ENCODE measurements at regions of chr16 and their contacts with region 1.

Region 1: GRCh38 chr16:57591086-57591869 is 37.2 kb upstream of the ADGRG1 start:
- DNase-seq: peak; percentile 74
- H3K4me3 ChIP-seq: no peak overlapping the region
- H3K27ac ChIP-seq: peak overlapping the region; percentile 32
- H3K4me1 ChIP-seq: peaks cover 12% of the 10 kb centered on the region
- H3K27me3 ChIP-seq: no peaks in the 10 kb centered on the region
- CTCF ChIP-seq: peak; percentile 92 to 95
- POLR2A ChIP-seq: no peak

Region 2: GRCh38 chr16:57535680-57536305 is 55.5 kb before region 1 on chr16:
- CTCF ChIA-PET with region 1: no interaction called
- POLR2A ChIA-PET with region 1: no interaction called
- dilution Hi-C with region 1: no loop called
- intact Hi-C with region 1: no loop called
- DNase-seq: peak; percentile 87
- H3K4me3 ChIP-seq: peak overlapping the region; percentile 80 to 82 (median 80)
- H3K27ac ChIP-seq: peak overlapping the region; percentile 18
- H3K4me1 ChIP-seq: peaks cover 25% of the 10 kb centered on the region
- H3K27me3 ChIP-seq: peaks cover 3 to 24% of the 10 kb centered on the region in 2 experiments
- CTCF ChIP-seq: peak in 1 of 2 donors; percentile 16
- POLR2A ChIP-seq: no peak

Region 3: DNA sequence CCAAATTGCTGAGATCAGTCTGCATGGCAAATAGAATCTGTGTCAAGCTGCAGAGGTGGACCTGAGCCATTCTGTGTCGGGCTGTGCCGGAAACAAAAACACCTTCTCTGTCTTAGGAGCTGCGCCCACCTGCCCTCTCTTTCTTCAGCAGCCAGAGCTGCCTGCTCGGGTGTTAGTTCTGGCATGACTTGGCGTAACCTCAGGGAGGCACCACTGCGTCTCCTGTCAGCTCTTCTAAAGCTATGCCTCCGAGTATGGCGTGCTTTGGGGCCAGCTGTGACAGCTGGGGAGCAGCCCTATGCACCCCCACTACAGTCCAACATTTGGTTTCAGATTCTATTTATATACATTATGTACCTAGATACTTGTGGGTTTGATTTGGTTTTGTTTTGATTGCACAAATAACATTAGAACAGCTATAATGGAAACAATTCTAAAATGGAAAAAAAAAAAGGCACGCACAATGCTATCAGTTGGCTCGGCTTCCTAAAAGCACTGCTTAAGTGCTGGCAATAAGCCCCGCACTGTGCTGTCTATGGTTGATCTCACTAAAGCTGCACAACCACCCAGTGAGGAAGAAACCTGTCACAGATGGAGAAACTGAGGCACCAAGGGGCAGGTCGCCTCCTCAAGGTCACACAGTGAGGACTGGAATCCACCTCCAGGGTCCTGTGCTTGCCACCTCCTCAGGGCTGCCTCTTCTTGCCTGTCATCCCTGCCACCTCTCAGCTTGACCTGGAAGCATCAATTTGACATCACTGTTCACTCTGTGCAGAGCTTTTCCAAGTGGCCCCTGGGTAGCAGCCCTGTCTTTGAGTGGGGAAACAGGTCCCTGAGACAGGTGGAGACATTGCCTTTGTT is 18.5 kb after region 1 on chr16:
- CTCF ChIA-PET with region 1: interaction called, 25 read pairs
- POLR2A ChIA-PET with region 1: no interaction called
- dilution Hi-C with region 1: no loop called
- intact Hi-C with region 1: no loop called
- DNase-seq: peak; percentile 53
- H3K4me3 ChIP-seq: no peak overlapping the region
- H3K27ac ChIP-seq: no peak overlapping the region
- H3K4me1 ChIP-seq: no peaks in the 10 kb centered on the region
- H3K27me3 ChIP-seq: no peaks in the 10 kb centered on the region
- CTCF ChIP-seq: peak in 1 of 2 donors; percentile 36
- POLR2A ChIP-seq: no peak

Region 4: DNA sequence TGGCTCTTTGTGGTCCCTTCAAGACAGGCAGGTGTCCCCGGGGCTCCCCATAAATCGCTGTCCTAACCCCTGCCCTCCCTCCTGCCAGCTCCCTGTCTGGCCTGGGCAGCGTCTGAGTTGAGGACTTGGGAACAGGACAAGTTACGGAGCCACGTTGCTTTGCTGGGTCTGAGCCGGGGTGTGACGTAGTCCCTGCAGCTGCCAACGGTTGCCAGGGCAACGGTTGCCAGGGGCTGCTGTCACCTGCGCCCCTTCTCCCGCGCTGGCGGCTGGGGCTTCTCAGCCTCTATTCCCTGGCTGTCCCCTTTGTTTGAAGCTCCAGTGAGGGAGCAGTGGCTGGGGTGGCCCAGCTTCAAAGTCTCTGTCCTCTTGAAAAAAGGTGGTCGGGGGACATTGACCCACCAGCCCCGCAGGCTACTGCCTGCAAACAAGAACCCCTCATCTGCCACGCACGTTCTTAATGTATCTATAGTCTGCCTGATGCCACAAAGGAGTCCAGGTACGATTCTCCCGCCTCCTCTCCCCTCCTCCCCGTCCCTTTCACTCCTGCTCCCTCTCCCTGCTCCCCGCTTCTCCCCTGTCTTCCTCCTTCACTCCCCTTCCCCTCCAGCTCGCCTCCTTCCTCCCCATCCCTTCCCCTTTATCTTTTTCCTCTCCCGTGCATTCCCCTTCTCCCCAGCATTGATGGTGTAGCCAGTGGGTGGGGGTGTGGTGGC is 48.1 kb after region 1 on chr16:
- CTCF ChIA-PET with region 1: interaction called, 20 read pairs
- POLR2A ChIA-PET with region 1: no interaction called
- dilution Hi-C with region 1: no loop called
- intact Hi-C with region 1: no loop called
- DNase-seq: no peak
- H3K4me3 ChIP-seq: no peak overlapping the region
- H3K27ac ChIP-seq: no peak overlapping the region
- H3K4me1 ChIP-seq: peaks cover 36% of the 10 kb centered on the region
- H3K27me3 ChIP-seq: no peaks in the 10 kb centered on the region
- CTCF ChIP-seq: no peak
- POLR2A ChIP-seq: no peak

Region 5: DNA sequence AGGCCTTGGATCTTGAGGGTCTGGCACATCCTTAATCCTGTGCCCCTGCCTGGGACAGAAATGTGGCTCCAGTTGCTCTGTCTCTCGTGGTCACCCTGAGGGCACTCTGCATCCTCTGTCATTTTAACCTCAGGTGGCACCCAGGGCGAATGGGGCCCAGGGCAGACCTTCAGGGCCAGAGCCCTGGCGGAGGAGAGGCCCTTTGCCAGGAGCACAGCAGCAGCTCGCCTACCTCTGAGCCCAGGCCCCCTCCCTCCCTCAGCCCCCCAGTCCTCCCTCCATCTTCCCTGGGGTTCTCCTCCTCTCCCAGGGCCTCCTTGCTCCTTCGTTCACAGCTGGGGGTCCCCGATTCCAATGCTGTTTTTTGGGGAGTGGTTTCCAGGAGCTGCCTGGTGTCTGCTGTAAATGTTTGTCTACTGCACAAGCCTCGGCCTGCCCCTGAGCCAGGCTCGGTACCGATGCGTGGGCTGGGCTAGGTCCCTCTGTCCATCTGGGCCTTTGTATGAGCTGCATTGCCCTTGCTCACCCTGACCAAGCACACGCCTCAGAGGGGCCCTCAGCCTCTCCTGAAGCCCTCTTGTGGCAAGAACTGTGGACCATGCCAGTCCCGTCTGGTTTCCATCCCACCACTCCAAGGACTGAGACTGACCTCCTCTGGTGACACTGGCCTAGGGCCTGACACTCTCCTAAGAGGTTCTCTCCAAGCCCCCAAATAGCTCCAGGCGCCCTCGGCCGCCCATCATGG is 72.8 kb after region 1 on chr16:
- CTCF ChIA-PET with region 1: interaction called, 12 read pairs
- POLR2A ChIA-PET with region 1: no interaction called
- dilution Hi-C with region 1: no loop called
- intact Hi-C with region 1: no loop called
- DNase-seq: no peak
- H3K4me3 ChIP-seq: no peak overlapping the region
- H3K27ac ChIP-seq: no peak overlapping the region
- H3K4me1 ChIP-seq: no peaks in the 10 kb centered on the region
- H3K27me3 ChIP-seq: no peaks in the 10 kb centered on the region
- CTCF ChIP-seq: no peak
- POLR2A ChIP-seq: no peak

Region 6: DNA sequence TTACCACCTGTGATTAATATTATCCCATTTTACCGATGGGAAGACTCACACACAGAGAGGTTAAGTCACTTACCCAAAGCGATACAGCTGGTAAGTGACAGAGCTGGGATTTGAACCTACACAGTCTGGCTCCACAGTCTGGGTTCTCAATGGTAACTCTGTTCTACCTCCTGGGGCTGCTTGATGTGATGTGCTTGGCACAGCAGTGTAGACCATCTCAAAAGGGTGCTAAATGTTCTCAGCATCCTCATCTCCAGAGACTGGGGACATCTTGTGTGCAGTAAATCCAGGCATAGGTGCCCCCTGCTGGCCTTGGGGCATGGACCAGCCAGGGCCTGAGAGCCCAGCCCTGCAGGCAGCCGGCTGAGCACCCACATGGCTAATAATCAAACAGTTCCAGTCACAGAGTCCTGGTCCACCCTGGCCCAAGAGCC is 128.9 kb after region 1 on chr16:
- CTCF ChIA-PET with region 1: interaction called, 17 read pairs
- POLR2A ChIA-PET with region 1: no interaction called
- dilution Hi-C with region 1: no loop called
- intact Hi-C with region 1: loop called (anchors 1 kb)
- DNase-seq: peak; percentile 53
- H3K4me3 ChIP-seq: no peak overlapping the region
- H3K27ac ChIP-seq: no peak overlapping the region
- H3K4me1 ChIP-seq: no peaks in the 10 kb centered on the region
- H3K27me3 ChIP-seq: peaks cover 0 to 6% of the 10 kb centered on the region in 2 experiments
- CTCF ChIP-seq: peak; percentile 70 to 83
- POLR2A ChIP-seq: no peak

Region 7: DNA sequence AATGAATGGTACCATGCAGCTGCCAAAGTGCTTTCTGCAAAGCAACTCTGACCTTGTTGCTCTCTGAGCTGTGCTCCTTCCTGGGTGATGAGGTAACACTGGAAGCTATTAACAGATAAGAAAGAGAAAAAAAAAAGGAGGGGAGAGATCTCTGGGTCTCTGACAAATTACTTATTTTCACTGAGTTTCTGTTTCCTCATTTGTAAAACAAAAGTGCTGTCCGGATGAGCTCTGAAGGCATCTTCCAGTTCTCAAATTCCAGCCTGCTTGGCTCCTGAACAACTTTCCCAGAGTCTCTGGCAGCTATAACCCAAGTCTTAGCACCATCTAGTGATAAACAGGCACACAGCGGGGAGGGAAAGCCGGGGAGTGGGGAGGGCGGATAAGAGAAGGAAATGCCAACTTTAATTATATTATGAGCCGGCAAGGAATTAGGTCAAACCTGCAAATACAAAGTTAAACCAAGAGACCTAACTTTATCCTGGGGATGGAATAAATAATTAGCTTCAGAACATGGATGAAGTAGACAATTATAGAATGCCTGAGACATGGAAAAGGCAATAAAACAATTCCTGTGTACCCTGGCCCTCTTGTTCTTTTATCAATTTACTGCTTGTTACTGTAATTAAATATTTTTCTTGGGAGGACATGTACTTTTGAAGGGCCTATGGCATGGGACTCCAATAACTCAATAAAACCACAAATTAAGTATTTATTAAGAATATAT is 272.3 kb after region 1 on chr16:
- CTCF ChIA-PET with region 1: interaction called, 5 read pairs
- POLR2A ChIA-PET with region 1: no interaction called
- dilution Hi-C with region 1: no loop called
- intact Hi-C with region 1: loop called (anchors 5 kb)
- DNase-seq: peak; percentile 76
- H3K4me3 ChIP-seq: no peak overlapping the region
- H3K27ac ChIP-seq: no peak overlapping the region
- H3K4me1 ChIP-seq: peaks cover 5% of the 10 kb centered on the region
- H3K27me3 ChIP-seq: peaks cover 0 to 2% of the 10 kb centered on the region in 2 experiments
- CTCF ChIP-seq: peak; percentile 37 to 56
- POLR2A ChIP-seq: no peak